ENCODE measurements at regions of chr12 and their contacts with region 1.

Region 1: DNA sequence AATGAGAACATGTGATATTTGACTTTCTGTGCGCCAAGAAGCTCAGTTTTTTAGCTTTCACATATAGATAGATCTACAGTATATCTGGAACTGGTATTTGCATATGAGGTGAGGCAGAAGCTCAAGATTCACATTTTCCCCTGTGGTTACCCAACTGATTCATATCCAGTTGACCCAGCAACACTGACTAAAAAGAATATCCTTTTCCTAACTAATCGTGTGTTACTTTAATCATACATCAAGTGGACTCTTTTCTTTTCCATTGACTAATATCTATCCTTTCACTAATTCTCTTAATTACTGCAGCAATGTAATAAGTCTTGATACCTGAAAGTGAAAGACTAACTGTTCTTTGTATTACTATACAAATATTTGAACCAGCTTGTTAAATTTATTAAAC is 236.1 kb downstream of the AEBP2 start:
- DNase-seq: no peak
- H3K4me3 Mint-ChIP-seq: no peak overlapping the region
- H3K27ac Mint-ChIP-seq: peak overlapping the region; percentile 69
- H3K4me1 Mint-ChIP-seq: peaks cover 37% of the 10 kb centered on the region
- H3K27me3 Mint-ChIP-seq: no peaks in the 10 kb centered on the region

Region 2: DNA sequence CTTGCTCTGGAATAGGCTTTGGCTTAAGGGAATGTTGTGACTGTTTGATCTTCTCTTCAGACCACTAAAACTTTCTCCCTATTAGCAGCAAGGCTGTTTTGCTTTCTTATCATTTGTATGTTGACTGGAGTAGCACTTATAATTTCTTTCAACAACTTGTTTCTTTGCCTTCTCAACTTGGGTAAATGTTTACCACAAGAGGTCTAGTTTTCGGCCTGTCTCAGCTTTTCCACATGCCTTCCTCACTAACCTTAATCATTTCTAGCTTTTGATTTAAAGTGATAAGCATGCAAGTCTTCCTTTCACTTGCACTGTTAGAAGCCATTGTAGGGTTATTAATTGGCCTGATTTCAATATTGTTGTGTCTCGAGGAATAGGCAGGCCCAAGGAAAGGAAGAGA is 362.7 kb before region 1 on chr12:
- intact Hi-C with region 1: loop called (anchors 5 kb)
- DNase-seq: no peak
- H3K4me3 Mint-ChIP-seq: no peak overlapping the region
- H3K27ac Mint-ChIP-seq: peak overlapping the region; percentile 20
- H3K4me1 Mint-ChIP-seq: peaks cover 20% of the 10 kb centered on the region
- H3K27me3 Mint-ChIP-seq: no peaks in the 10 kb centered on the region

Region 3: GRCh38 chr12:19439059-19440018 is 236.0 kb before region 1 on chr12 and contains the start of gene AEBP2:
- intact Hi-C with region 1: loop called (anchors 1 kb)
- DNase-seq: peak; percentile 90
- H3K4me3 Mint-ChIP-seq: peak within 1 kb of the TSS; percentile 98
- H3K27ac Mint-ChIP-seq: peak within 1 kb of the TSS; percentile 99
- H3K4me1 Mint-ChIP-seq: peaks cover 51% of the 10 kb centered on the region
- H3K27me3 Mint-ChIP-seq: no peaks in the 10 kb centered on the region
- total RNA-seq, gene AEBP2: 64.3 and 67.6 TPM in 2 replicates

Region 4: GRCh38 chr12:19482551-19483109 is 192.7 kb before region 1 on chr12:
- intact Hi-C with region 1: loop called (anchors 5 kb)
- DNase-seq: peak; percentile 9
- H3K4me3 Mint-ChIP-seq: peak overlapping the region; percentile 7
- H3K27ac Mint-ChIP-seq: peak overlapping the region; percentile 86
- H3K4me1 Mint-ChIP-seq: peaks cover 43% of the 10 kb centered on the region
- H3K27me3 Mint-ChIP-seq: no peaks in the 10 kb centered on the region

Region 5: GRCh38 chr12:19553175-19553574 is 122.2 kb before region 1 on chr12:
- intact Hi-C with region 1: loop called (anchors 5 kb)
- DNase-seq: no peak
- H3K4me3 Mint-ChIP-seq: no peak overlapping the region
- H3K27ac Mint-ChIP-seq: no peak overlapping the region
- H3K4me1 Mint-ChIP-seq: peaks cover 15% of the 10 kb centered on the region
- H3K27me3 Mint-ChIP-seq: no peaks in the 10 kb centered on the region

Region 6: DNA sequence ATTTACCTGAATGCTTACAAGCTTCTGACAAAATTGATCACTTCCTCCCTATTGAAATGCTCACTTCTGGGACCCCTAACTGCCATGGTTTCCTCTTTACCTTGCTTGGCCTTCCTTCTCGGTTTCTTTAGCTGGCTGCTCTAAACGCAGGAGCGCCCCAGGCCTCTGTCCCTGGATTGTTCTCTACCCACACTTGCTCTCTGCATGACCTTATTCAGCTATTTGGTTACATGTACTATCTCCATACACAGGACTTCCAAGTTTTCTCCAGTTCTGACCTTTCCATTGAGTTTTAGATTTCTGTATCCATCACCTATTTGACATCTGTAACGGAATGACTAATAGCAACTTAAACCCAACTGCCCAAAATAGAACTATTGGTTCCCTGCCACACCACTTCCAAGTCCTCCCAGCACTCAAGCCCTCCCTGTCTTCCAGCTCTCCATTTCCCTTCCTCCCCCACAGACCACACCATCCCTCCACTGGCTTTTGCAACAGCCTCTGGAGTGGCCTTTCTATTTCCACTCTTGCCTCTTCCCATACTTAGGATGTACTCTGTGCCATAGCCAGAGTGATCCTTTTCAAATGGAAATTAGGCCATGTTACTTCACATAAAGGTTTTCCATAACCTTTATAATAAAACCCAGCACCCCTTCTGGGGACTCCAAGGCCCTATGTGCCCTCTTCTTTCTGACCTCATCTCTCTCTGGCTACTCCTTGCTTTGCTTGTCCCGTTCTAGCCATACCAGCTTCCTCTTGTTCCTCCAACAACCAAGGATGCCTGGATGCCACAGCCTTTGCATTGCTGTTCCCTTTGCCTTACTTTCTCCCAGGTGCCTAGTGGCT is 33.9 kb before region 1 on chr12:
- intact Hi-C with region 1: no loop called
- DNase-seq: no peak
- H3K4me3 Mint-ChIP-seq: no peak overlapping the region
- H3K27ac Mint-ChIP-seq: no peak overlapping the region
- H3K4me1 Mint-ChIP-seq: no peaks in the 10 kb centered on the region
- H3K27me3 Mint-ChIP-seq: no peaks in the 10 kb centered on the region

Region 7: GRCh38 chr12:19694627-19695026 is 19.3 kb after region 1 on chr12:
- intact Hi-C with region 1: loop called (anchors 1 kb)
- DNase-seq: no peak
- H3K4me3 Mint-ChIP-seq: no peak overlapping the region
- H3K27ac Mint-ChIP-seq: peak overlapping the region; percentile 32
- H3K4me1 Mint-ChIP-seq: peaks cover 19% of the 10 kb centered on the region
- H3K27me3 Mint-ChIP-seq: no peaks in the 10 kb centered on the region

Region 8: GRCh38 chr12:19726122-19726521 is 50.8 kb after region 1 on chr12:
- intact Hi-C with region 1: no loop called
- DNase-seq: no peak
- H3K4me3 Mint-ChIP-seq: no peak overlapping the region
- H3K27ac Mint-ChIP-seq: no peak overlapping the region
- H3K4me1 Mint-ChIP-seq: no peaks in the 10 kb centered on the region
- H3K27me3 Mint-ChIP-seq: no peaks in the 10 kb centered on the region

Region 9: DNA sequence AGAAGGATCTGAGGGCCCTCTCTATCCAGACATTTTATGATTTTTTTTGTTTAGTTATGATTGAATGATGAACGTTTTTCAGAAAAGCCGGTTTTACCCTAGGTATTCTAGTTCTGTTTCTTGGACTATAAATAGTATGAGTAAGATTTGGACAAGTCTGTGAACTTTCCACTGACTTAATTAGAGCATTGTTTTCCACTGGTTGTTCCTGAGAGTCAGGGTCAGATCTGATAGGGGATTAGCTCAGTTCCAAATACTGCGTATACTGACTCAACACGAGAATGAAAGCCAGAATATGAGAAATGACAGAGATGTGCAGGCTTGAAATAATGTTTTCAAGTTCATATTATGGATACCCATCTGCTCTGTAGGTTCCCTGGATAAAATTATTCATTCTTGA is 125.5 kb after region 1 on chr12:
- intact Hi-C with region 1: loop called (anchors 1 kb)
- DNase-seq: no peak
- H3K4me3 Mint-ChIP-seq: no peak overlapping the region
- H3K27ac Mint-ChIP-seq: peak overlapping the region; percentile 83
- H3K4me1 Mint-ChIP-seq: peaks cover 21% of the 10 kb centered on the region
- H3K27me3 Mint-ChIP-seq: no peaks in the 10 kb centered on the region

Measured in activated T-helper 2 cell treated with anti-CD3 and anti-CD28 coated beads, Interferon-gamma antibody, Interleukin-2, Interleukin-4, amounts not matched to agents 10 μg/mL and 5 μg/mL and 100 μg/mL, durations not matched to agents 14 hours and 24 hours and 36 hours (primary cell).